ENCODE measurements at regions of chr9 and their contacts with region 1.

Region 1: DNA sequence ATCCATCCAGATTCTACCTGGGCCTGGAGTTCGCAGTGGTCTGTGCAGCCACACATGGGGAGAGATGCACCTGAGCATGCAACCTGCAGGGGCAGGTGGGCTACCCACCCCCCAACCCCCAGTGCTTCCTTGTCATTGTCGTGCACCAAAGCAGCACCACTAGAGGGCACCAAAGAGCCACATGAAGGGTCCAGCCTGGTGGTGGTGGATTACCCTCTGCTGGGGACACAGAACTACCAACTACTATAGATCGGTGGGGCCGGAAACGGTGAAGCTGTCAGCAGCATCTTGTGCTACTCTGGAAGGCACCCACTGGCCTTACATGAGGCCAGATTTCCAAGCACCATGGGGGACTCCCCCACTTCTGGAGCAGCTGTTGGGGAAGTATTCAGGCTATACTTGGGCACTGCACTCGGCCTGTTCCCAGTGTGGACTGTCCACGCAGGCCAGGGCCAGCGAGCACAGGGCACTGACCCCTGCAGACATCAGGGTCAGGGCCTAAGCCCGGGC is 60.2 kb upstream of the TBC1D2 start:
- DNase-seq: peak; percentile 69 to 91 (median 83)
- H3K4me3 ChIP-seq: no peak overlapping the region
- H3K27ac ChIP-seq: no peak overlapping the region
- H3K4me1 ChIP-seq: no peaks in the 10 kb centered on the region
- H3K27me3 ChIP-seq: no peaks in the 10 kb centered on the region
- CTCF ChIP-seq: peak; percentile 84 to 94 (median 90)
- POLR2A ChIP-seq: no peak

Region 2: GRCh38 chr9:98150721-98151120 is 164.9 kb before region 1 on chr9:
- intact Hi-C with region 1: no loop called
- DNase-seq: no peak
- H3K4me3 ChIP-seq: no peak overlapping the region
- H3K27ac ChIP-seq: no peak overlapping the region
- H3K4me1 ChIP-seq: peaks cover 0 to 6% of the 10 kb centered on the region in 2 donors
- H3K27me3 ChIP-seq: no peaks in the 10 kb centered on the region
- CTCF ChIP-seq: no peak
- POLR2A ChIP-seq: no peak

Region 3: DNA sequence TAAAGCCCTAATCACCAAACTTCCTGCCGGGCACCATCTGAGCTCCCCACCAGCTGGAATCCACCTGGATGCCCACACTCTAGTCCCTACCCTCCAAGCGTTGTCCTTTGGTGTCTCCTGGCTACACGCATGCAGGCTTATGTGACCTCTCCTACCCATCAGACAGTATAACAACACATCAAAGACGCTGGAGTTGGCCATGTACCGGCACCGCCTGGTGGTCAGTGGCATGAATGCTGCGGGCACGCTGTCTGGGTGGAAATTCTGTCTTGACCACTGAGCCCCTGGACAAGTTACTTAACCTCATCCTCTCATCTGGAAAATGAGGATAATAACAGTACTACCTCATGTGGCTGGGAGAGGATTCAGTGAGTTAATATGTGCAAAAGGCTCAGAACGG is 99.8 kb before region 1 on chr9:
- intact Hi-C with region 1: no loop called
- DNase-seq: peak; percentile 44 to 83 (median 56)
- H3K4me3 ChIP-seq: no peak overlapping the region
- H3K27ac ChIP-seq: peak overlapping the region in 2 of 5 donors; percentile 75 to 76
- H3K4me1 ChIP-seq: peaks cover 6 to 12% of the 10 kb centered on the region in 2 donors
- H3K27me3 ChIP-seq: no peaks in the 10 kb centered on the region
- CTCF ChIP-seq: peak; percentile 23 to 64 (median 49)
- POLR2A ChIP-seq: no peak

Region 4: DNA sequence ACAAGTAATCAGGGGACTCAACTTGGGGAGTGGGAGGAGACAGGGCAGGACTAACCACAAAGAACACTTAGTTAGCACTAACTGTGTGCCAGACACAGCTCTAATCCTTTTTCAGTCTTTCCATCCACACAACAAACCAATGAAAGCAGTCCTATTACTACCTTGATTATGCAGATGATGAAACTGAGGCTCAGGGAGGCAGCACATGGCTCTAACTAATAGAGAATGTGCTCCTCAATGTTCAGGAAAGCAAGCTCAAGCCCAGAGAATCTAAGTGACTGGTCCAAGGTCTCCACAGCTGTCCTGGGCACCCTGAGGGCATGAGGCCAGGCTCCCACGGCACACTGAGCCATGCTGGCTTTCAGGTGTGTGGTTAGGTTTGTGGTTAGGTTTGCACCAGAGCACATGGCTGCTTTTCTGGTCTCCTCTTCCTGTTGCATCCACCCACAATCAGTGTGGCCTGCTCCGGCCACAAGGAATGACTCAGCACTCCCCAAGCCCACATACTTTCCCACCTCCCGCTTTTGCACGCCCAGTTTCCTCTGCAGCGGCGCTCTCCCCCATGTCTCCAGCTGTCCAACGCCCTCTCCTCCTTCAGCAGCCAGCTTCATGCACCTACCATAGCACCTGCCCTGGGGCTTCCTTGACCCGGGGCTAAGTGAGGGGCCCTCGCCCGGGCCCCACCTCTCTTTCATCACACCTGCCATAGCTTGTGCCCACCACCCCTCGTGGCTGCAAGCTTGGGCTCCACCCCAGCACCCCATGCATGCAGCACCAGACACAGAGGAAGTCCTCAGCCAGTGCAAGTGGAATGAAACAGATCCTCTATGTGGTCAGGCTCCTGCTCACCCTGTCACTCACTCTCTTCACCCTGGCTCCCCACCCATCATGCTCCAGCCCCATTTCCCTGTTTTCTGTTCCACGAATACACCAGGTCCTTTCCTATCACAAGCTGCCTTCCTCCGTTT is 260.1 kb after region 1 on chr9:
- intact Hi-C with region 1: no loop called
- DNase-seq: no peak
- H3K4me3 ChIP-seq: no peak overlapping the region
- H3K27ac ChIP-seq: no peak overlapping the region
- H3K4me1 ChIP-seq: no peaks in the 10 kb centered on the region
- H3K27me3 ChIP-seq: no peaks in the 10 kb centered on the region
- CTCF ChIP-seq: no peak
- POLR2A ChIP-seq: no peak

Region 5: DNA sequence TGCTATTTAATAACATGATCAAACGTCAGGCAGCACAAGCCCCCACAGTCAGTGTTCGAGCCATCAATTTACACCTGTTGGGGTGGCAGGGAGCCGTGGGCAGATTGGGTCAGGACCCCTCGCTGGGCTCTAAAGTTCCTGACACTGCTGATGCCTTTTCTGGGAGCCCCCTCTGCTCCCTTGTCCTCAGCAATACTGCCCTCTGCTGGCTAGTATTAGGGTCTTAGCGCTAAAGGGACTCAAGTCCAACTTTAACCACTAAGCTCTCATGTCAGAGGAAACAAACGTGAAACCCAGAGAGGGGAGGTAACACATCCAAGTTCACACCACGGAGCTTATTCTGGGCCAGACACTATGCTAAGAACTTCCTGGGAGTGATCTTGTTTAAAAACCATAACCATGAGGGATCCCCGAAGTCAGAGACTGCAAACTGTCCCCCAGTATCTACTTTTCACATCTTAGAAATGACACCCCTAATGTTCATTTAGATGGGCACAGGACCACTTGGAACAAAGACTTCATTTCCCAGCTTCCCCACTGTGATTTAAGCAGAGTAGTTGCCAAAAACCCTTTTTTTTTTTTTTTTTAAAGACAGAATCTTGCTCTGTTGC is 460.3 kb after region 1 on chr9:
- intact Hi-C with region 1: loop called (anchors 5 kb)
- DNase-seq: peak in 4 of 7 donors; percentile 39 to 44 (median 42)
- H3K4me3 ChIP-seq: no peak overlapping the region
- H3K27ac ChIP-seq: no peak overlapping the region
- H3K4me1 ChIP-seq: no peaks in the 10 kb centered on the region
- H3K27me3 ChIP-seq: no peaks in the 10 kb centered on the region
- CTCF ChIP-seq: peak; percentile 42 to 65 (median 54)
- POLR2A ChIP-seq: no peak

Region 6: DNA sequence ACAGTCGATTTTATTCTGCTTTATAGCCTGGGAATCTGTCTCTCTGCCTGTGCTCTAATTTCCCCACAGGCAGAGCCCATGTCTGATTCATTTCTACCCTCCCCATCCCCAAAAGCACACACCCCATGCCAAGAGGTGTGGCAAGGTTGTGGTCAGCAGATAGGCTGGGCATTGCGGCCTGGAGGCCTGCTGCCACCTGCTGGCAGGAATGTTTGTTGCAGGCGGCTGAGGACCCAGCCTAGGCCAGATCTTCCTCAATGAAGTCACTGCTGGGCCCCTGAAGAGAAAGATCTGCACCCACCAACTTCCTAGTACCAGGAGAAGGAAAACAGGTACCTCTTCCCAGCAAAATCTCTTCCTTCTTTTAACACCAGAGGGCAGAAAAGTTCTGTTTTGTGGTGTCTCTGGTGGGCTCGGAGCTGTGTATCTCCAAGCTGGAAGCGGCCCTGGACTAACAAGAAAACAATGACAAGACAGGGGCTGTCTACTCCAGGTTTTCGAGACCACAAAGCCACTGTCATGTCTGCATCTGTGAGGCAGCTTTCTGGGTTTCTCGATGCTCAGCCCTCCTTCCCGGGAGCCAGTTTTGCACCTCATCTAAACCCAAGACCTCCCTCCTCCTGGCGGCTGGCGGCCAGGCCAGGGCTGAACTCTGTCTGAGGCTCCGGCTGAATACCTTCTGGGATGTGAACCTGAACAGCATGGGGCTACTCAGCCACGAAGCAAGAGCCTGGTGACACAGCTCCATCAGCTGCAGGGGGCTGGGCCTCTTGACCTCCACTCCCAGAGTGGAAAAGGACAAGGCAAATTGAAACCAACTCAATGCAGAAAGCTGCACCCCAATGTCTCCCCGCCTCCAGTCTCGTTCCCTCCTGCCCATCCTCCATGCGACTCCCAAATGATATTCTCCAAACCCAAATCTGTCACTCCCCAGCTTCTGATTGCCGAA is 475.8 kb after region 1 on chr9:
- intact Hi-C with region 1: loop called in 1 of 2 experiments (anchors 5 kb)
- DNase-seq: peak; percentile 89 to 95 (median 92)
- H3K4me3 ChIP-seq: no peak overlapping the region
- H3K27ac ChIP-seq: peak overlapping the region in 2 of 5 donors; percentile 8 to 23
- H3K4me1 ChIP-seq: peaks cover 4 to 15% of the 10 kb centered on the region in 2 donors
- H3K27me3 ChIP-seq: no peaks in the 10 kb centered on the region
- CTCF ChIP-seq: peak; percentile 99 to 100 (median 100)
- POLR2A ChIP-seq: no peak

Measured in adrenal gland (tissue), 19 donors.